Posterior vena cava (tissue), 2 donors: ENCODE measurements at regions of chr17 and their contacts with region 1.

Region 1: DNA sequence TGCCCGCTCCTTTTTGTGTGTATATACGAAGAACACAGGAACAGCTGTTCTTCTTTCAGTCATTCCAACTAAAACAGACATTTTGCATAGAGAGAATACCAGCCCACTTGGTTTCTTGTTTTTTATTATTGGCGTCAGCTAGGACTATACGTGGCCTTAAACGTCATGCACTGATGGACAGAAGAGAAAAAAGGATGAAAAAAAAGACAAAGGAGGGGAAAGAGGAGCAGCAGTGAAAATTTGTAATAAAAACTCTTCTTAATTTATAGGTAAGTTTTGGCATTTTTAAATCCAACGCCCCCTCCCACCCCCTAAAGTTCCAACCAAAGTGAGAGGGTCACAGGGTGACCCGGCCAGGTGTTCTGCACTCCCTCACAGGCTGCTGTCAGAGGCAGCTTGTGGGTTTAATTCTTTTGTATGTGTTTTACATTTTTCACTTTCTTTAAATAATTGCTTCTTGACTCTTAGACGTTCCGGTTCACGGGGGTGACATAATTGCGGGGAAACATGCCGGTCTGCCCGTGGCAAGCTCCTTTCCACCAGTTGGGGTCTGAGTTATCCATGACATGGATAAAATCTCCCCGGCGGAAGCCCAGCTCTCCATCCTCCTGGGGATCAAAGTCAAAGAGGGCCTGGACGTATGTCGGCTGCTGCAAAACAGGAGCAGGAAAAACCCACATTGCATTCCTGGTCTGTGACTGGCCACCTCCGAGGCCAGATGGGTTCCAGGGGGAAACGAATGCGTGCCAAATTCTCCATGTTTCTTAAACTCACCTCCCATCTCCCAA is 30.9 kb upstream of the SLC25A19 start:
- DNase-seq: no peak

Region 2: GRCh38 chr17:75238684-75239191 is 81.4 kb before region 1 on chr17:
- intact Hi-C with region 1: no loop called
- DNase-seq: no peak

Region 3: GRCh38 chr17:75405365-75406221 is 85.5 kb after region 1 on chr17 and contains the start of gene GRB2:
- intact Hi-C with region 1: loop called (anchors 2 to 5 kb)
- DNase-seq: peak; percentile 100
- total RNA-seq, gene GRB2: 87.2 to 97.8 TPM

Region 4: DNA sequence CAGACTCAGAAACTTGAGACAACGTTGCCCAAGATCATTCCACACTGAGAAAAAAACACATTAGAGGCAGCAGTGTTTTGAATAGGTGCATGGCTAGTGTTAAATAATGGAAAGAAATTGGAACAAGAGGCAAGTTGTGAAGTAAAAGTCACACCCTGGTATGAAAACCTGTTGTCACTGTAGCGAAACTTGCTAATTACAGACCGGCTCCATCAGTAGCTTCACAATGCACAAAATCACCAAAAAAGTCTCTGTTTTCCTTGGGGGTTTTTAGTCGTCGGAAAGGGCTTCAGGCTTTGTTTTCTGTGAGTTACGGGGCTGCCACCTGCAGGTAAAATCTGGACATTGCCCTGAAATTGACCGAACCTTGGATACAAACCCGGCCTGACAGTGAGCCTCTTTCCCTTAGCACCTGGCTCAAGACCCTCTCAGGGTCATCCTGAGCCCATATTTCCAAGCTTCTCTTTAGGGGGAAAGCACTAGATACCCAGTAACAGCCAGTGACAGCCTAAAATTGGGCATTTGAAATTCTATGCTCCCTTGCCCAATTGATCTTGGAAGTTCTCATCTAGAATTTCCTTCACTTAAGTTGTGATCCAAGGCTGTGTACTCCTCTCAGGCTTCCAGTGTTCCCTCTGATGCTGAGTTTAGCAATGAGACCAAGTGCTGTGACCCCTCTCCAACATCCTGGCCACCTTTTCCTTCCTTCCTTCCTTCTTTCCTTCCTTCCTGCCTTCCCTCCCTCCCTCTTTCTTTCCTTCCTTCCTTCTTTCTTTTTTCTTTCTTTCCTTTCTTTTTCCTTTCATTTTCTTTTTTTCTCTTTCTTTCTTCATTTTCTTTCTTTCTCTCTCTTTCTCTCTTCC is 92.6 kb after region 1 on chr17:
- intact Hi-C with region 1: loop called in 1 of 2 experiments (anchors 5 kb)
- DNase-seq: no peak

Region 5: GRCh38 chr17:75524953-75525719 is 205.0 kb after region 1 on chr17 and contains the start of gene LLGL2:
- intact Hi-C with region 1: loop called in 1 of 2 experiments (anchors 5 kb)
- DNase-seq: peak; percentile 89
- total RNA-seq, gene LLGL2: 6.4 to 6.8 TPM